Ovary (tissue), 10 donors: ENCODE measurements at regions of chr9 and their contacts with region 1.

Region 1: DNA sequence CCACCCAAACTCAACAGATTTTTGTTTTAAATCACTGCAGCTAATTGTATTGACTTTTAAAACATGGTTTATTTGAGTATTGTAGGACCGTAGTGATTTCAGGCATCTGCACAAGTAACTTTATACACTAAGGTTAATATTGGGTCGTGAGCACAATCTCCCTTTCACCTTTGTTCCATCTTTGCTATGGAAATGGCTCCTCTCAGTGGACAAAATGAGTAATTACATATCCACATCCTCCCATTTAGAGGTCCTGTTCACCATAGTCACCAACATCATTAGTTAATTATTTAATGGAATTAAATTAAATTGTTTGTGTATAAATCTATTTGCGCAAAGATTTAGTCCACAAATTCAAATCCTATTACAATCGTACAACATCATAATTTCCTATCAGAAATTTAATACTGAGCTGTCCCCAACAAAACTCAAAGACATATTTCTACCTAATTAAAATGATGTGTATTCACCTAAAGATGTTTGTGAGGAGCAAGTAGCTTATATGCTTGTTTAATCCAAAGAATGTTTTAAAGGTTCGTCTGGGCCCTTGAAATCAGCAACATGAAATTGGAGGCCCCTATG is 173.0 kb upstream of the DAPK1 start:
- DNase-seq: no peak
- H3K4me3 ChIP-seq: no peak overlapping the region
- H3K27ac ChIP-seq: no peak overlapping the region
- H3K4me1 ChIP-seq: peaks cover 2% of the 10 kb centered on the region
- H3K27me3 ChIP-seq: no peaks in the 10 kb centered on the region
- CTCF ChIP-seq: peak; percentile 55 to 93 (median 88)
- EP300 ChIP-seq: no peak
- POLR2A ChIP-seq: no peak

Region 2: DNA sequence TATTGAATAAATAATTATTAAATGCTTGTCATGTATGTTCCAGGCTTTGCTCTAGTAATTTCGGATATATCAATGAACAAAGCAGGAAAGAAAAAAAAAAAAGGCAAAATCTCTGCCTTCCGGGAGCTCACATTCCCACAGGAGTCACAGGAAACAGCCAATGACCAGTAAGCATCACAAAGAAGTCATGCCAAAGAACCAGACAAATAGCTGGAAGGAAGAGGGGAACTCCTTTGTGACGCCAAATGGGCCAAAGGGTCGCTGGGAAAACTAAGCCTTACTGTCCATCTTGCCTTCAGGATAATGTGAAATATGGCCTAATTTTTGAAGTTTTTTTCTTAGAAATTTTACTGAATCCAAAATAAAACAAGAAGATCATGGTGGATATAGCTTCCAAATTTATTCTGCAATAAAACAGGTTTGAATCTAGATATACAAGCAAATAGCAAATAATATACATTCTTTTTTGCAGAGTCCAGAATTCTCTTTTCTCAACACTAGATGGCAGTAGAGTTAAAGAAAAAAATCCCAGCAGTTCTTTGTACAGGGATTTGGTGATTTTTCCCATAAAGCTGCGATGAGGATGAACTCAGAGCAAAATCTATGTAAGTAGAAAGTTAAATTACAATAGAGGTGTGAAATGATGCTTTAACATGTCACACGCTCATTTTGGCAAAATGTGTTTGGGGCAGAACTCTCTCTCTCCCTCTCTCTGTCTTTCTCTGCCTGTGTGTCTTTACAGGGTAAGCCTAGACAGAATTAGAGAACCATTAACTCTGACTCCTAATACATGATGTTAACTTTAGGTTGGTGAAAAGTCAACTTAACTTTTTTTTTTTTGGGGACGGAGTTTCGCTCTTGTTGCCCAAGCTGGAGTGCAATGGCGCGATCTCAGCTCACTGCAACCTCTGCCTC is 910.5 kb before region 1 on chr9:
- intact Hi-C with region 1: loop called in 3 of 4 experiments (anchors 5 to 10 kb)
- DNase-seq: no peak
- H3K4me3 ChIP-seq: no peak overlapping the region
- H3K27ac ChIP-seq: no peak overlapping the region
- H3K4me1 ChIP-seq: no peaks in the 10 kb centered on the region
- H3K27me3 ChIP-seq: no peaks in the 10 kb centered on the region
- CTCF ChIP-seq: peak; percentile 40 to 68 (median 66)
- EP300 ChIP-seq: no peak
- POLR2A ChIP-seq: no peak

Region 3: DNA sequence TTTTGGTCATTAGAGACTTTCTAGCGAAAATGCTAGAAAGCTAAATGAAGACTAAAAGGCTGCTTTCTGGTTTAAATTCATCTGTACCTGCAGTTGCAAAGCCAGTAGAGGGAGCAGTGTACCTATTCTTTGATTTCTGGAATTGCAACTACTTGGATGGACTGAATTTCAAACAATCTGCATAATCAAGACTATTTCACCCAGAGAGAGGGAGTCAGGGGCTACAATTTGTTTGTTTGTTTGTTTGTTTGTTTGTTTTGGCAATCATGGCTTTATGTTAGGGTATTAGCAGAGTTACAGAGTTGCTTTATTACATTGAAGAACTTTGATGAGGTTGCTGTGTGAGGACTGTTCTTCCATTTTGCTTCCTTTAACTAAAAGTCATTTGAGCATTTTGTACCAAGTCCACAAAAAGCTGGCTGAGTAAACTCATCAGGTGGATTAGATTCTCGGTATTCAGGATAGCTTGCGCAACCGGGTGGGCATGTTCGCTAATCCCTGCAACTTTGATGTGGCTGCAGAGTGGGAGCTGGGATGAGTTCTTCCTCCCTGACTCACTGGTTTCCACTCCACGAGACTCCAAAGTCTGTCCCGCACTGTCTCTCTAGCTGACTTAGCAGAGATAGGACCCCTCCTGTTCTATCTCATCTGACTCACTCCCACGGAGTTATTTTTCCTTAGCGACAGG is 890.5 kb before region 1 on chr9:
- intact Hi-C with region 1: loop called in 2 of 4 experiments (anchors 5 to 10 kb)
- DNase-seq: peak; percentile 55 to 81 (median 57)
- H3K4me3 ChIP-seq: peak overlapping the region; percentile 7
- H3K27ac ChIP-seq: peak overlapping the region in 1 of 2 donors; percentile 48
- H3K4me1 ChIP-seq: peaks cover 2% of the 10 kb centered on the region
- H3K27me3 ChIP-seq: no peaks in the 10 kb centered on the region
- CTCF ChIP-seq: peak; percentile 51 to 87 (median 80)
- EP300 ChIP-seq: no peak
- POLR2A ChIP-seq: no peak

Region 4: DNA sequence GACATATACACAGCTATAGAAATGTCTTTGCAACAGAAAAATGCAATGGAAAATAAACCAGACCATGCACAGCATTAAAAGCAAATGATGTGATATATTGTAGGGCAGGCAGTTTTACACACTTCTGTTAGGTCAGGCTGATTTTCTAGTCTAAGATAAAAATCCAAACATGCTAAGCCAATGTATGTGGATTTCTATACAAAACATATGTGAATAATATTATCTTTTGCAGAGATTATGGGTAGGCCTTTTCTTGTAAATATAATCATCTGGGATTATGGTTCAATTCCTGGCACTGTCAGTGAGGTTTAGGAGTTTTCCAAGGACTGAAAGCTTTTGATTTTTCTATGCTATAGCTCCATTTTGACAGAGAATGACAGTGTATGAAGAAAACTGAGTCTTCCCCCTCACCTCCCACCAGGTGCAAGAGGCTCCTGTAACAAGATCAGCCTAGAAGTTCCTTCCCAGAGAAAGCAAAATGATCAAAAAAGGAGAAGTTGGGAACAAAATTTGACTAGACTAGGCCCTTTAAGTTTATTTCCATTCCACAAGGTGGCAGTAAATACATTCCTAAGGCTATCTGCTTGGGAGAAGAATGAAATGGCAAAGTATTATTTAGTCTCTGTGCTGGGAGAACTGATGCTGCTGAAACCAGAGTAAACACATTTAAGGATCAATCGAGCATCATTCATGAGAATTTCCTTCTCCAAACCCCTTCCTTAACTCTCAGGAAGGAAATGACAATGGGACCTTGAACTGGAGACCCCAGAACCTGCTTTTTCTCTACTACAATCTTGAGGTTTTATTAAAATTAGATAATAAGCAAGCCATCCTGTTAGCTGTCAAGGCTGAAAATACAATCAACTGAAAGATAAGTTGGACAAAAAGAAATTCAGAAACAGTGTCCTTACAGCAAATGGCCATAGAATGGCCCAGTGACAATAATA is 837.5 kb before region 1 on chr9:
- intact Hi-C with region 1: loop called (anchors 5 to 10 kb)
- DNase-seq: no peak
- H3K4me3 ChIP-seq: no peak overlapping the region
- H3K27ac ChIP-seq: no peak overlapping the region
- H3K4me1 ChIP-seq: no peaks in the 10 kb centered on the region
- H3K27me3 ChIP-seq: no peaks in the 10 kb centered on the region
- CTCF ChIP-seq: peak; percentile 65 to 74 (median 71)
- EP300 ChIP-seq: no peak
- POLR2A ChIP-seq: no peak

Region 5: DNA sequence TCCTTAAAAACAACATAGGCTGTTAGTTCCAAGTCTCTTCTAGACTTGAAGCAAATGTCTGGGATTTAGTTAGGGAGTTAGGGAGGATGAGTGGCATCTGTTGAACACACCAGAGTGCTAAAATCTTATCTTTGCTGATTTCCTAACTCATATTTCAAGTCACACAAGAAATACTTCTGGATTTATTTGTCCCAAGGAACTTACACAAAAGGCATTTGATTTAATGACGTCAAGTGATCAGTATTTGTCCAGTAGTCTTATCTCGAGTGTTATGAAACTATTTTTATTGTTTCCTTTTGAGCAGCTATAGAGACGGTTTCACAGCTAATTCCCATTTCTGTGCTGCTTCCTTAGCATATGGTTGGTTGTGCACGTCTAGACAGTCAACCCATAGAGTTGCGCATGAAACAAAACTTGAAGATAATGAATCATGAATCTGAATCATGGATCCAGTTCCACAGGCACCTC is 830.0 kb before region 1 on chr9:
- intact Hi-C with region 1: loop called (anchors 5 to 10 kb)
- DNase-seq: no peak
- H3K4me3 ChIP-seq: no peak overlapping the region
- H3K27ac ChIP-seq: no peak overlapping the region
- H3K4me1 ChIP-seq: no peaks in the 10 kb centered on the region
- H3K27me3 ChIP-seq: no peaks in the 10 kb centered on the region
- CTCF ChIP-seq: no peak
- EP300 ChIP-seq: no peak
- POLR2A ChIP-seq: no peak

Region 6: GRCh38 chr9:86948074-86948929 is 376.4 kb before region 1 on chr9:
- intact Hi-C with region 1: loop called (anchors 5 to 10 kb)
- DNase-seq: peak; percentile 71 to 85 (median 82)
- H3K4me3 ChIP-seq: peak overlapping the region; percentile 65
- H3K27ac ChIP-seq: peak overlapping the region; percentile 10 to 95
- H3K4me1 ChIP-seq: peaks cover 2% of the 10 kb centered on the region
- H3K27me3 ChIP-seq: no peaks in the 10 kb centered on the region
- CTCF ChIP-seq: peak; percentile 75 to 94 (median 89)
- EP300 ChIP-seq: no peak
- POLR2A ChIP-seq: no peak

Region 7: GRCh38 chr9:87148331-87149104 is 176.2 kb before region 1 on chr9:
- intact Hi-C with region 1: no loop called
- DNase-seq: peak; percentile 63 to 79 (median 77)
- H3K4me3 ChIP-seq: peak overlapping the region; percentile 20
- H3K27ac ChIP-seq: peak overlapping the region; percentile 75 to 76
- H3K4me1 ChIP-seq: peaks cover 10% of the 10 kb centered on the region
- H3K27me3 ChIP-seq: no peaks in the 10 kb centered on the region
- CTCF ChIP-seq: peak in 1 of 3 donors; percentile 15
- EP300 ChIP-seq: no peak
- POLR2A ChIP-seq: no peak

Region 8: GRCh38 chr9:87250205-87250604 is 74.5 kb before region 1 on chr9:
- intact Hi-C with region 1: no loop called
- DNase-seq: no peak
- H3K4me3 ChIP-seq: no peak overlapping the region
- H3K27ac ChIP-seq: no peak overlapping the region
- H3K4me1 ChIP-seq: no peaks in the 10 kb centered on the region
- H3K27me3 ChIP-seq: no peaks in the 10 kb centered on the region
- CTCF ChIP-seq: no peak
- EP300 ChIP-seq: no peak
- POLR2A ChIP-seq: no peak

Region 9: DNA sequence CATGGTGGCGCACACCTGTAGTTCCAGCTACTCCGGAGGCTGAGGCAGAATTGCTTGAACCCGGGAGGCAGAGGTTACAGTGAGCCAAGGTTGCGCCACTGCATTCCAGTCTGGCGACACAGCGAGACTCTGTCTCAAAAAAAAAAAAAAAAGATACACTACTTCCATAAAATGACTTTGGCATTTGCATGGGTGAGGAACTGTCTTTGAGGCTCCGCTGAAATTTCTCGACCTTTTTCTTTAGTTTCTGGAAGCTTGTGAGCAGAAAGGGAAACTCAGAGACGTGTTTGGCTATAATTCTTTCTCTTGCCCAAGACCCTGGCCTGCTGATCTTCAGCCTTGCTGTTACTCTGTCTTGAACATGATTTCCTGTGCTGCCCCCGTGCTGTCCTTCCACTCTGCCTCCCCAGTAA is 1100.8 kb after region 1 on chr9:
- intact Hi-C with region 1: no loop called
- DNase-seq: no peak
- H3K4me3 ChIP-seq: no peak overlapping the region
- H3K27ac ChIP-seq: no peak overlapping the region
- H3K4me1 ChIP-seq: peaks cover 23% of the 10 kb centered on the region
- H3K27me3 ChIP-seq: no peaks in the 10 kb centered on the region
- CTCF ChIP-seq: no peak
- EP300 ChIP-seq: no peak
- POLR2A ChIP-seq: no peak